PC-3 (cell line): ENCODE measurements at regions of chr6 and their contacts with region 1.

Region 1: DNA sequence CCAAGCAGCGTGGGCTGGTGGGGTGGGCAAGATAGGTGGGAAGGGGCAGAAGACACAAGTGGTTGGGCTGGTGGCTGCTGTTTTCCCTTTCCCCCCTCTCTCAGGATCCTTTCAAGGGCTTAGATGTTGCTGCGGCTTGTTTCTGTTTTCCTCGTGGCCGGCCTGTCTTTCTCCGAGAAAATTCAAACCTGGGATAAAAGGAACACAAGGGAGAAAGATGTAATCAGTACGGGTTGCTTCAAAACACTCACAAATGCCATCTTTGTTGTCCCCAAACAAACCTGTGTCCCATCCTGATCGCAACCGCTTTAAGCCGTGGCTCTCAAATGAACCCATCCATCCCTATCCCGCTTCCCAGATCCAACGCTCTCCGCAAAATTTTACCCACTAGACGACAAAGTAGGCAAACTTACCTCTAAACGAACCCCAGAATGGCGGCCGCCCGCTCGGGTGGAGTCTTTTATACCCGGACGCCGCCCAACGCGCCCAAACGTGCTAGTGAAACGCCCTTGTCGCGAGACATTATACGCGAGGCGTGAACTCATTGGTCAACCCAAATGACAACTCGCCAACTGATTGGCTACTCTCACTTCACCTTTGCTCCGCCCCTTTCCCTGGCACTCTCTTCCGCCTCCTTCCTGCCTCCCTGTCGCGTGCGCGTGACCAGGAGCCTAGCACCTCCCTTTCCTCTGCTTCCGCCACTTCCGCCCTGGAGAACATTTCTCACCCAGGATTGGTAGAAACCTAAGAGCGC is at the start of gene PPP1R10:
- DNase-seq: peak; percentile 100
- ATAC-seq: peak; percentile 73
- H3K4me3 ChIP-seq: peak within 1 kb of the TSS; percentile 86
- H3K27ac ChIP-seq: peak within 1 kb of the TSS; percentile 92
- H3K4me1 ChIP-seq: peaks cover 40% of the 10 kb centered on the region
- H3K27me3 ChIP-seq: no peaks in the 10 kb centered on the region
- CTCF ChIP-seq: no peak
- total RNA-seq, gene PPP1R10: 44.2 and 44.5 TPM in 2 replicates

Region 2: GRCh38 chr6:30194797-30195690 is 421.9 kb before region 1 on chr6:
- CTCF ChIA-PET with region 1: no interaction called
- POLR2A ChIA-PET with region 1: no interaction called
- intact Hi-C with region 1: no loop called
- DNase-seq: no peak
- ATAC-seq: no peak
- H3K4me3 ChIP-seq: no peak overlapping the region
- H3K27ac ChIP-seq: no peak overlapping the region
- H3K4me1 ChIP-seq: no peaks in the 10 kb centered on the region
- H3K27me3 ChIP-seq: no peaks in the 10 kb centered on the region
- CTCF ChIP-seq: no peak

Region 3: GRCh38 chr6:30541515-30542403 is 75.2 kb before region 1 on chr6:
- CTCF ChIA-PET with region 1: interaction called, 5 read pairs
- POLR2A ChIA-PET with region 1: interaction called, 16 read pairs
- intact Hi-C with region 1: no loop called
- DNase-seq: peak; percentile 95
- ATAC-seq: peak; percentile 65
- H3K4me3 ChIP-seq: peak overlapping the region; percentile 68
- H3K27ac ChIP-seq: no peak overlapping the region
- H3K4me1 ChIP-seq: peaks cover 18% of the 10 kb centered on the region; the same call in 1 of the 2 replicates
- H3K27me3 ChIP-seq: no peaks in the 10 kb centered on the region
- CTCF ChIP-seq: peak; percentile 98

Region 4: GRCh38 chr6:30571075-30571768 is 45.8 kb before region 1 on chr6 and contains the start of gene ABCF1:
- CTCF ChIA-PET with region 1: no interaction called
- POLR2A ChIA-PET with region 1: interaction called, 11 read pairs
- intact Hi-C with region 1: no loop called
- DNase-seq: peak; percentile 99
- ATAC-seq: peak; percentile 92
- H3K4me3 ChIP-seq: peak within 1 kb of the TSS; percentile 82
- H3K27ac ChIP-seq: peak within 1 kb of the TSS; percentile 75
- H3K4me1 ChIP-seq: peaks cover 32% of the 10 kb centered on the region
- H3K27me3 ChIP-seq: no peaks in the 10 kb centered on the region
- CTCF ChIP-seq: no peak
- total RNA-seq, gene ABCF1: 67.3 and 77.3 TPM in 2 replicates

Region 5: DNA sequence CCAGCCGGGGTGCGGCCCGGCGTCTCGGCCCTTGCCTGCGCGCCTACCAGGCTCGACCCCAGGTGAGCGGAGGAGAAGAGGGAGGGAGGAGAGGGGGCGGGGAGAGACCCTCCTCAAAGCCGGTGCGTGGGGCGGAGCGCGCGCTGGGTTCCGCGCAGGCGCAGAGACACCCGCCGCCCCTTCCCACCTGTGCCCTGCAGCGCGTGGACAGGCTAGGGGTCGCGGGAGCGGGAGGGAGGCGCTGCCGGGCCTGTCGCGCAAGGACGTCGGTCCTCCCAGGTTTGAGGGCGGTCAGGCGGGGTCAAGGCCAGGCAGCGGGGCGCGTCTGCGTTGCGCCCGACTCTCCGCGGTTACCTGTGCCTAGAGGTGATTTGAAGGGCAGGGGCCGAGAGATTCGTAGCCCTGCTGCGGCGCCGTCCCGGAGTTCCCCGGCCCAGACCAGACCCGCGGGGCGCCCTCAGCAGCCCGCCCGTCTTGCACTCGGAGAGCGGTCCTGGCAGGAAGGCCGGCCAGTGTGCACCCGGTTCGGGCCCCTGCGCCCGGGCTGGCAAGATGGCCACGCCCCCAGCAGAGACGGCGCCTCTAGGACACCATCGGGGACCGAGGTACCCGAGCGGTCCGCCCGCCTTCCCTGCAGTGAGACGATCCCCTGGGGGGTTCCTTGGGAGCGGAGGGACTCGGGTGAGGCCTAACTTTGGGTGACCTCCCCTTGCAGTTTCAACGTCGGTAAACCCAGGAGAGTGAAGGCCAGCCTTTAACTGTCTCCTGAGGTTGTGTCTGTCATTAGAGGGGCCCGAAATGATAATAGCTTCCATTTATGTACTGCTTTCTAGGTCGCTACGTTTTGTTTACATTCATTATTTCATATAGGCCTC is 30.5 kb after region 1 on chr6:
- CTCF ChIA-PET with region 1: no interaction called
- POLR2A ChIA-PET with region 1: no interaction called
- intact Hi-C with region 1: no loop called
- DNase-seq: peak; percentile 64
- ATAC-seq: peak; percentile 78
- H3K4me3 ChIP-seq: peak overlapping the region; percentile 82
- H3K27ac ChIP-seq: peak overlapping the region; percentile 55
- H3K4me1 ChIP-seq: peaks cover 11% of the 10 kb centered on the region
- H3K27me3 ChIP-seq: no peaks in the 10 kb centered on the region
- CTCF ChIP-seq: no peak

Region 6: DNA sequence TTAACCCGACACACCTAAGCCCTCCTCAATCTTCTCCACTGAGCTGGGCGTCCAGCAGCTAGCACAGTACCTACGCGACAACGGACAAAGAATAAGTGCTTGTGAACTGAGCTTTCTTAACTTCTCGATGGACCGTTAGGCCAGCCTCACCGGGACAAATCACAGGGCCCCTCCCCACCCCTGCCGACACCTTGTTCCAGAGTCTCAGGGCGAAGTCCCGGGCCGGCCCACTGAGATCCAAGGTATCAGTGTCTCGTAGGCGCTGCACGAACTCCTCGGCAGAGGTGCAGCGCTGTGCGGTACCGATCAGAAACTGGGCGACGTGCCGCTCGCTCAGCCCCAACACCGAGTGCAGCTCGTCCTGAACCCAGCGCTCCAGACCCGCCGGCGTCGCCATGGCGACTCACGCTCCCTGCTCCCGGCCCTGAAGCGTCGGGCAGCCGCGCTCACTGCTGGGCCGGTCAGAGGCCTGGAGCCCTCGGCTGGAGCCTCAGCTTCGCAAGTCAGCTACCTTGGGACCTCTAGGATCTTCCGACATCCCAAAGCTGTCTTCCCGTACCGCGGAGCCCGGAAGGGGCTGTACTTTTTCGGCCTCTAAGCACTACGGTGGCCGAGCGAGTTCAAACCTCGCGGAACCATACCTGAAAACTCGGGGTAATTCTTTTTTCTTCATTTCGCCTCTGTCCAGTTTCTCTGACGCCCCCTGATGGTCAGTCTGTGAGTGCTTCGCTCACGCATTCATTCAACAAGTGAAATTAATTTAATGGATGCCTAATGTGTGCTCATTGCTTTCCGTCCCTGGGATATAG is 55.7 kb after region 1 on chr6 and contains the start of gene DHX16:
- CTCF ChIA-PET with region 1: interaction called, 3 read pairs
- POLR2A ChIA-PET with region 1: interaction called, 3 read pairs
- intact Hi-C with region 1: loop called (anchors 1 kb)
- DNase-seq: peak; percentile 99
- ATAC-seq: peak; percentile 82
- H3K4me3 ChIP-seq: peak within 1 kb of the TSS; percentile 75
- H3K27ac ChIP-seq: no peak within 1 kb of the TSS
- H3K4me1 ChIP-seq: peaks cover 4% of the 10 kb centered on the region
- H3K27me3 ChIP-seq: no peaks in the 10 kb centered on the region
- CTCF ChIP-seq: peak; percentile 95
- total RNA-seq, gene DHX16: 50.0 and 75.6 TPM in 2 replicates